BJ (cell line): ENCODE measurements at regions of chr7 and their contacts with region 1.

Region 1: GRCh38 chr7:51067757-51068156 is 248.9 kb downstream of the COBL start:
- DNase-seq: peak; percentile 14
- H3K4me3 ChIP-seq: no peak overlapping the region
- H3K27me3 ChIP-seq: no peaks in the 10 kb centered on the region
- CTCF ChIP-seq: peak; percentile 79

Region 2: GRCh38 chr7:50792342-50793114 is 275.2 kb before region 1 on chr7:
- CTCF ChIA-PET with region 1: interaction called, 13 read pairs
- POLR2A ChIA-PET with region 1: no interaction called
- DNase-seq: no peak
- H3K4me3 ChIP-seq: peak overlapping the region; percentile 76
- H3K27me3 ChIP-seq: peaks cover 6% of the 10 kb centered on the region
- CTCF ChIP-seq: no peak

Region 3: DNA sequence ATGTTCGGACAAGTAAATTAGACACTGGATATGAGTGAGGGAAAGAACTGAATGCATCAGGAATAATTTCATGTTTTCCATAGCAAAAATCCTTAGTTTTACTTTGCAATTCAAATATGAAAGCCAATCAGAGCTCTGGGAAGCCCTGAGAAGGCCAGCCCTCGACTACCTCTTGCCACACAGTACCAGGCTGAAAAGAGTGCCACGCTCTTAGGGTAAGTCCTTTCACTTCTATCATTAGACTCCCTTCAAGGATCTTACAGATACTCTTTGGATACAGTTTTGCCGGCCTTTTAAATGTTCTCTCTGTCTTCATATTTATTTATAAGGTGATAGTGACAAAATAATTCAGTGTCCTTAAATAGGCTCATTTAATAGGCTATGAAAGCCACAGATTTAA is 247.0 kb after region 1 on chr7:
- CTCF ChIA-PET with region 1: no interaction called
- POLR2A ChIA-PET with region 1: no interaction called
- DNase-seq: no peak
- H3K4me3 ChIP-seq: no peak overlapping the region
- H3K27me3 ChIP-seq: peaks cover 20% of the 10 kb centered on the region
- CTCF ChIP-seq: no peak